HEK293T (cell line): ENCODE measurements at regions of chr2 and their contacts with region 1.

Region 1: GRCh38 chr2:241302759-241303651 is 12.5 kb downstream of the HDLBP start:
- DNase-seq: no peak

Region 2: GRCh38 chr2:241315093-241315878 is 12.3 kb after region 1 on chr2 and contains the start of gene HDLBP:
- CTCF ChIA-PET with region 1: no interaction called
- POLR2A ChIA-PET with region 1: interaction called, 23 read pairs
- DNase-seq: peak; percentile 94